ENCODE measurements at regions of chr1 and their contacts with region 1.

Region 1: GRCh38 chr1:200971955-200972711 is 51.4 kb downstream of the KIF21B start:
- DNase-seq: peak in 3 of 4 donors; percentile 58 to 93 (median 76)
- ATAC-seq: peak; percentile 83
- H3K4me3 ChIP-seq: no peak overlapping the region
- H3K27ac ChIP-seq: no peak overlapping the region
- H3K4me1 ChIP-seq: no peaks in the 10 kb centered on the region
- H3K27me3 ChIP-seq: no peaks in the 10 kb centered on the region
- CTCF ChIP-seq: peak; percentile 94 to 97

Region 2: DNA sequence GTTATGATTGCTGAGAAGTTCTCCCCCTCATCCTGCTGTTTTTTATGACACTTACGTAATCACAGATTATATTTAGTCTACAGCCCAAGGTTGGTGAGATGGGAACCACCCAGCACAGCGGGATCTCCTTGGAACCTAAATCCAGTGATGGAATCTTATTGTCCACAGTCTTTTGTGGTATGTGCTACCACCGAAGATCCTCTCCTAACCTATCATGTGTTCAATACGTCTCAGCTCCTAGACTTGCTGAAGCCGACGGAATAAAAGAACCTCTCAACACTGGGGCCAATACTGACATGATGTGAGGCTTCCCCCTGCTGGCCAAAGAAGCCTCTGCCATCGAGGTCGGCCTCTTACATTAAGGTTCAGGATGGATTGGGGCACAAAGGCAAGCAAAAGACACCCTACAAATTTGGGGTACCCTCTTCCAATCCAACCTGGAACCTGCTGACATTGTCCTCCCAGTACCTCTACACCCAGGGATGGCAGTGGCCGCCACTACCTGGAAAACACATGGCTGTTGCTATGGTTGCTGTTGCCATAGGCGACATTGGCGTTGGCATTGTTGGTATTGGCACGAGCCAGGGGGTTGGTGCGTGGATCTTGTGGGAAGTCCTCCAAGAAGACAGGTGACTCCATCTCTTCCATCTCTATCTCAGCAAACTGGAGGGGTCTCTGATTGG is 70.8 kb after region 1 on chr1:
- intact Hi-C with region 1: loop called (anchors 5 to 10 kb)
- DNase-seq: peak in 3 of 4 donors; percentile 58 to 85 (median 71)
- ATAC-seq: peak; percentile 94
- H3K4me3 ChIP-seq: no peak overlapping the region
- H3K27ac ChIP-seq: no peak overlapping the region
- H3K4me1 ChIP-seq: peaks cover 0 to 5% of the 10 kb centered on the region in 2 donors
- H3K27me3 ChIP-seq: no peaks in the 10 kb centered on the region
- CTCF ChIP-seq: peak; percentile 75 to 84

Region 3: DNA sequence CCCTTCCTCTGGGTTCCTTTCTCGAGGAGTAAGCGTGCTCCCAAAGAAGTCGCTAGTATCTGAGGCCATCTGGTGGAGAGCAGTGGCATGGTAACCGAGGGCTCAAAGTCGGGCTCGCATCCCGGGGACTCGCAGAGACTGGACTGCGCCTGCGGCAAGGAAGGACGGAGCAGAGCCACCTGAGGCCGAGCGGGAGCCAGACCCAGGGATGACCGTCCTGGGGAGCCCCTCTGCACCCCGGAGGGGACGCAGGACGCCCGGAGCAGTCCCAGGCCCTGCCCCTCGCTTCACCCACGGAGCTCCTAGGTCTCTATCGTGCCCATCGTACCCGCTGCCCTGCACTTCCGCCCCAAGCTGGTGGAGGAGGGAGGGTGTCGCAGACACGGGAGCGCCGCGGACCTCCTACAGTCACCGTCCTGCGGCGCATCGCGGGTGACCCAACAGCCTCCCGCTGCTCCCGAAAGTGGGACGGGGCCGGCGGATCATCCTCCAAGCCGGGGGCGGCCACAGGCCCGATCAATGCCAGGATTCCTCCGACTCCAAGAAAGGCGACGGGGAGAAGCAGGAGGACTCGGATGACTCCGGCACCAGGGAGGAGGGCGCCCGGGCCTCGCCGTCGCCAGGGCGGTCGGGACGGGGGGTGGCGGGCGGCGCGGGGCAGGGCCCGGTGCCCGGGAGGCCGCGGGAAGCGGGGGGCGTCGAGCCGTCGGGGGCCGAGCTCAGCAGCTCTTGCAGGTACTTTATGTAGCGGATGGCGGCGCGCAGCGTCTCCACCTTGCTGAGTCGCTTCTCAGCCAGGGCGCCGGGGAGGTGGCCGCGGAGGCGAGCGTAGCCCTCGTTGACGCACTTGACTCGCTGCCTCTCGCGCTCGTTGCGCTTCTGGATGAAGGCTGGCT is 142.4 kb after region 1 on chr1:
- intact Hi-C with region 1: loop called in 1 of 2 experiments (anchors 5 kb)
- DNase-seq: peak; percentile 84 to 91 (median 90)
- ATAC-seq: peak; percentile 97
- H3K4me3 ChIP-seq: peak overlapping the region; percentile 49 to 66
- H3K27ac ChIP-seq: no peak overlapping the region
- H3K4me1 ChIP-seq: peaks cover 0 to 14% of the 10 kb centered on the region in 2 donors
- H3K27me3 ChIP-seq: peaks cover 7 to 51% of the 10 kb centered on the region in 2 donors
- CTCF ChIP-seq: peak; percentile 57 to 82

Region 4: DNA sequence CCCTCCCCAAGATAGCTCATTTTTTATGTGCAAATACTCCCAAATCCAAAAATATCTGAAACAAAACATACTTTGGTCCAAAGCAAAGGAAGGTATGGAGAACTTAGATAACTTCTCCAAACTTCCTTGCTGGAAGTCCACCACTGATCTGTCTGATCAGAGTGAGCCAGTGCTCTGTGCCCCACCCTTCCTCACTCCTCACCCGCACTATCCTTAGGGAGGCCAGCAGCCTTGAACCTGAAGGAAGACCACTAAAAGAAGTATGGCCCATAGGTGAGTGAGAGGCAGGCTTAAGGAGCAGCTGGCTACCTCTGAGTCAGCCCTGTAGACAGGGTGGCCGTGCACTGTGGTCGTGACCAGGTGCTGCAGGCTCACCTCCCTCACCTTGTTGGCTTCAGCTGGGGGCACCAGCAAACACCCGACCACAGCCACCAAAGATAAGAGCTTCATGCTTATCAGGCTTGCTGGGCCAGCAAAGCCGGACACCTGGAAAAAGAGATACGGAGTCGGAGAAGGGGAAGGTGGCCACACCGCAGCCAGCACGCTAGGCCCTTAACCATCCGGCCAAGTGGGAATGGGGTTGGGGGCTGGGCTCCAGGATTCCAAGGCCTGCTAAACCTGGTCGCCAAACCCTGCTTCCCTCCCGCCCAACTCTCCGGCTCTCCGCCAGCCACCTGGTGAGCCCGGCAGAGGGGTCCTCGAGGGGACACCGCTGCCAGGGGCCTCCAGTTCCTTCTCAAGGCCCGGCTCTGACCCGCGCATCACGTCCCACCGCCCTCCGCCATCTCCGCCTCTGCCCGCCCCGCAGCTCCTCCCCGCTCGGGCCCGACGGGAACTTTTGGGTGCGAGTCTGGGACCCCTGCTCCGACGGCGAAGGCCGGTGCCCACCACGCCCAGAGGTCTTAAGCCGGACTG is 181.6 kb after region 1 on chr1:
- intact Hi-C with region 1: no loop called
- DNase-seq: peak in 1 of 4 donors; percentile 59
- ATAC-seq: peak; percentile 86
- H3K4me3 ChIP-seq: peak overlapping the region; percentile 69 to 86
- H3K27ac ChIP-seq: peak overlapping the region; percentile 27 to 71
- H3K4me1 ChIP-seq: peaks cover 6 to 21% of the 10 kb centered on the region in 2 donors
- H3K27me3 ChIP-seq: no peaks in the 10 kb centered on the region
- CTCF ChIP-seq: no peak

Region 5: DNA sequence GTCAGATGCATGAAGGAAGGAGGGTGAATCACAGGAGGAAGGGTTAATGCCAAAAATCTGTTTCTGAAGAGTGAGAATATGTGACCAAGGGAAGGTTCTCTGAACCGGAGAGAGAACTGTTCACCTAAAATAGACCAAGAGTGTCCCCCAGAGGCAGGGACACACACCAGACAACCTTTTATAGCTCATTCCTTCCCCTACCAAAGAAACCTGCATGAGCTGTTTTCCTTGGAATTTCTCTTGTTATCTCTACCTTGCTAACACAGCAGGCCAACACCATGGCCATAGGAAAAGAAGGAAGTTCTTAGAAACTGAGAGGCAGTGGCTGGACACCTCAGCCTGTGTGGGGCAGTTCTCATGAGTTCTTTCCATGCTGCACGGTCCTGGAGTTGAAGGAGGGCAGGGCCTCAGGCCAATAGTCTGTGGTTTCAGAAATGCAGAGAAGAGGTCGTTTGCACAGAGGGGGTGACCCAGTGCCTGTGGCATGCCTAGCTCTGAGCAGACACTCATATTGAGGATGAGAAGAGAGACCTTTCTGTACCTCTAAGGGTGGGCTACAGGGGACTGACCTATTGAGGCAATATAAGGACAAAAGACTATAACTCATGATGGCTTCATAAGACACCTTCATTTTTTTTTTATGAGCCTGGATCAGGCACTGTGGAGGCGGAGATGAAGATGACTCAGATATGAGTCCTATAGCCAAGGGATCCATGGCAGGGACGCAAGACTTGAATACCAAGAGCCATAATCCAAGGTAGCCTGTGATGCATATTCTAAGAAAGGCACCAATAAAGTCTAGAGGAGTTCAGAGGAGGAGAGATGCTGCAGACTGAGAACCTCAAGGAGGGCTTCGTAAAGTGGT is 257.9 kb after region 1 on chr1:
- intact Hi-C with region 1: loop called in 1 of 2 experiments (anchors 10 kb)
- DNase-seq: peak in 1 of 4 donors; percentile 7
- ATAC-seq: peak; percentile 22
- H3K4me3 ChIP-seq: no peak overlapping the region
- H3K27ac ChIP-seq: no peak overlapping the region
- H3K4me1 ChIP-seq: no peaks in the 10 kb centered on the region
- H3K27me3 ChIP-seq: no peaks in the 10 kb centered on the region
- CTCF ChIP-seq: no peak